Calu3 (cell line): ENCODE measurements at regions of chr16 and their contacts with region 1.

Region 1: GRCh38 chr16:19907161-19907992 is 22.7 kb upstream of the GPRC5B start:
- DNase-seq: peak; percentile 88
- H3K4me3 Mint-ChIP-seq: no peak overlapping the region
- H3K27ac Mint-ChIP-seq: no peak overlapping the region
- H3K4me1 Mint-ChIP-seq: peaks cover 13% of the 10 kb centered on the region
- H3K27me3 Mint-ChIP-seq: peaks cover 52% of the 10 kb centered on the region
- CTCF ChIP-seq: peak; percentile 97

Region 2: GRCh38 chr16:19583665-19584300 is 323.6 kb before region 1 on chr16:
- CTCF ChIA-PET with region 1: interaction called, 12 read pairs
- intact Hi-C with region 1: no loop called
- DNase-seq: peak; percentile 61
- H3K4me3 Mint-ChIP-seq: no peak overlapping the region
- H3K27ac Mint-ChIP-seq: no peak overlapping the region
- H3K4me1 Mint-ChIP-seq: peaks cover 8% of the 10 kb centered on the region
- H3K27me3 Mint-ChIP-seq: no peaks in the 10 kb centered on the region
- CTCF ChIP-seq: peak; percentile 91

Region 3: GRCh38 chr16:19844945-19845641 is 62.3 kb before region 1 on chr16:
- CTCF ChIA-PET with region 1: no interaction called
- intact Hi-C with region 1: no loop called
- DNase-seq: no peak
- H3K4me3 Mint-ChIP-seq: no peak overlapping the region
- H3K27ac Mint-ChIP-seq: no peak overlapping the region
- H3K4me1 Mint-ChIP-seq: no peaks in the 10 kb centered on the region
- H3K27me3 Mint-ChIP-seq: no peaks in the 10 kb centered on the region
- CTCF ChIP-seq: no peak

Region 4: DNA sequence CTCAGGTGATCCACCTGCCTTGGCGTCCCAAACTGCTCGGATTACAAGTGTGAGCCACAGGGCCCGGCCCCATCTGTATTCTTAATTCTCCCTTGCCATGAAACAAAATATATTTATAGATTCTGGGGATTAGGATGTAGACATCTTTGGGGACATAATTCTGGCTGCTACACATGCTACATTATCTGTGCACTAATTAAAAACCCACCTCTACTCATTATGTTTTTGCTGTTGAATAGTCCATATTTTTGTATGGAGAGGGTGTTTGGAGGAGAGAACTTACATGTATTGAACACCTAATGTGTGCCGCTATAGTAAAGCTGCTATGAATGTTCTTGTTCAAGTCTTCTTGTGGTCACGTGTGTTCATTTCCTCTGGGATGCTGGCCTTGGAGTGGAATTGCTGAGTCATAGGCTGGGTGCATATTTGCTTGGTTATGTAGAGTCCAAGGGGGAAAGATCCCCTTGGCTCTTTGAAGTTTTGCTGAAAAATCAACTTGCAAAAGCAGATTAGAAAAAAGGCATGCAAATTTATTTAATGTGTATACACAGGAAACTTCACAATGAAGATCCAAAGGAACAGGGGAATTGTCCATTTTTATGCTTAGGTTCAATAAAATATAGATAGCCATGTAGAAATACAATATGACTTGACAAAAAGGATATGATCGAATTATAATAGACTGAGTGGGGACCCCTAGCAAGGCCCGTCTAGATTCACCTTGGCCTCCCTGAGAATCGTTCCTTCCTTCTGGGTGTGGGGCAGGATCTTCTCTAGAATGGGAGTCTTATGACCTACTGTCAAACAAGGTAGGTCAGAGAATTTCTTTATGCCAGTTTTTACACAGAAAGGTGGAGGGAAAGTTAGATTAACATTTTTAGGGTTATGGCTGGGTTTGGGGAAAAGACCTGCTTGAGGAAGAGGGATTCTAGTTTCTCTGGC is 19.3 kb after region 1 on chr16:
- CTCF ChIA-PET with region 1: interaction called, 13 read pairs
- intact Hi-C with region 1: no loop called
- DNase-seq: peak; percentile 20
- H3K4me3 Mint-ChIP-seq: no peak overlapping the region
- H3K27ac Mint-ChIP-seq: peak overlapping the region; percentile 22
- H3K4me1 Mint-ChIP-seq: no peaks in the 10 kb centered on the region
- H3K27me3 Mint-ChIP-seq: peaks cover 29% of the 10 kb centered on the region
- CTCF ChIP-seq: no peak

Region 5: DNA sequence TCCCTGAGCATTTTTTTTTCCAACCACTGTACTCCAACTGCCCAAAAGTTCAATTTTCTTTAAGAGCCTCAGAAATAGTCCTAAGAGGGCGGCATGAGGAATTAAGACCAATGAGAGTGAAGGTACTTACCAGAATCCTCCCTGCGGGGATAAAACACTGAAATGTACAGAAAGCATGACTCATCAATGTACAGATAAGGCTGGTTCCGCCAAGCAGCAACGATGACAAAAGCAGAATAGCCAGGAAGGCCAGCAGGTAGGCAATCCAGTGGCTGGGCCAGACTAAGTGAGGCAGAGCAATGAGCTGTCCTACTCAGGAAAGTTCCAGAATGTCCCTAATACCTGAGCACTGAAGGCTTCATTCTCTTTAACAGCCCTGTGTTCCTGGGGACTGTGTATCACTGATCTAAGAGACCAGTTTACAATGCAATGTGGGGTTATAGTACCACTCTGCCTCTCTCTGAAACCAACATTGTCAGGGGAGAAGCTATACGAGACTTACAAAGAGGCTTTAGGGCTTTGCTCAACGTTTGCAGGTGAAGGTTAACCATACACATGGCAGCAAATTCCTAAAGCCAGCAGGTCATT is 177.3 kb after region 1 on chr16:
- CTCF ChIA-PET with region 1: no interaction called
- intact Hi-C with region 1: loop called (anchors 10 kb)
- DNase-seq: peak; percentile 22
- H3K4me3 Mint-ChIP-seq: no peak overlapping the region
- H3K27ac Mint-ChIP-seq: no peak overlapping the region
- H3K4me1 Mint-ChIP-seq: no peaks in the 10 kb centered on the region
- H3K27me3 Mint-ChIP-seq: peaks cover 46% of the 10 kb centered on the region
- CTCF ChIP-seq: no peak

Region 6: GRCh38 chr16:20300312-20301097 is 393.1 kb after region 1 on chr16:
- CTCF ChIA-PET with region 1: interaction called, 155 read pairs
- intact Hi-C with region 1: loop called (anchors 1 kb)
- DNase-seq: peak; percentile 63
- H3K4me3 Mint-ChIP-seq: no peak overlapping the region
- H3K27ac Mint-ChIP-seq: no peak overlapping the region
- H3K4me1 Mint-ChIP-seq: no peaks in the 10 kb centered on the region
- H3K27me3 Mint-ChIP-seq: peaks cover 65% of the 10 kb centered on the region
- CTCF ChIP-seq: peak; percentile 91